Activated CD4-positive, alpha-beta T cell treated with anti-CD3 and anti-CD28 coated beads for 36 hours (primary cell): ENCODE measurements at regions of chr5 and their contacts with region 1.

Region 1: GRCh38 chr5:55936100-55936693 is 58.6 kb downstream of the IL6ST start:
- DNase-seq: peak; percentile 91
- ATAC-seq: peak; percentile 81
- H3K4me3 Mint-ChIP-seq: no peak overlapping the region
- H3K27ac Mint-ChIP-seq: no peak overlapping the region
- H3K4me1 Mint-ChIP-seq: peaks cover 16% of the 10 kb centered on the region
- H3K27me3 Mint-ChIP-seq: no peaks in the 10 kb centered on the region

Region 2: DNA sequence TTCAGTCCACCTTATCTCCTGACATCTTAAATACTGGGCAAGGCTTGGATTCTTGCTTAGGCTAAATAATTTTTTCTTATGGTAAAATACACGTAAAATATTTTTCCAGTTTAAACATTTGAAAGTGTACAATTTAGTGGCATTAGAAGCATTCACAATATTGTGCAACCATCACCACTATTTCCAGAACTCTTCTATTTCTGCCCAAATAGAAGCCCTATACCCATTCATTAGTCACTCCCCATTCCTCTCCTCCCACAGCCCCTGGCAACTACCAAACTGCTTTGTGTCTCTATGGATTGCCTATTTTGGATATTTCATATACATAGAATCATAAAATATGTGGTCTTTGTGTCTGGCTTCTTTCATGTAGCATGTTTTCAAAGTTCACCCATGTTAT is 27.4 kb before region 1 on chr5:
- CTCF ChIA-PET with region 1: no interaction called
- POLR2A ChIA-PET with region 1: no interaction called
- intact Hi-C with region 1: no loop called
- DNase-seq: no peak
- ATAC-seq: no peak
- H3K4me3 Mint-ChIP-seq: no peak overlapping the region
- H3K27ac Mint-ChIP-seq: no peak overlapping the region
- H3K4me1 Mint-ChIP-seq: peaks cover 11% of the 10 kb centered on the region
- H3K27me3 Mint-ChIP-seq: peaks cover 6% of the 10 kb centered on the region

Region 3: DNA sequence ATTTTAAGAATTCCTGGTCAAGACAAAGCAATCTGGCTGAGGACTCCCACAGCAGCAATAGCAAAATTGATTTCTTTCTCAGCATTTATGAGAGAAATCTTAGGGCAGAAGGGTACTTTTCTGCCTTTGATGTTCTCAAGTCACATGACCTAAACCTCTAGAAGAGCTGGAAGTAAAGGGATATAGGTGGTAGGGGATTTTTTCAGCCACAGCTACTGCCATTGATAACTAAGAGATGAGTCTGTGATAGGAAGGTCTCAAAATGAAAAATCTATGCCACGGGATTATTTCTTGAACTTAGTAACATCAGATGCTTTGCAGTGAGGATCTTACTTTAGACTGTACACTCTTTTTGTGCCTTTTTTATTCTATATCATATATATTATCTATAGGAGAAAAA is 23.0 kb after region 1 on chr5:
- CTCF ChIA-PET with region 1: interaction called, 16 read pairs
- POLR2A ChIA-PET with region 1: interaction called, 10 read pairs
- intact Hi-C with region 1: loop called in 1 of 2 experiments (anchors 2 kb)
- DNase-seq: no peak
- ATAC-seq: peak; percentile 75
- H3K4me3 Mint-ChIP-seq: no peak overlapping the region
- H3K27ac Mint-ChIP-seq: peak overlapping the region; percentile 72
- H3K4me1 Mint-ChIP-seq: peaks cover 18% of the 10 kb centered on the region
- H3K27me3 Mint-ChIP-seq: no peaks in the 10 kb centered on the region

Region 4: GRCh38 chr5:56164376-56164775 is 228.2 kb after region 1 on chr5:
- CTCF ChIA-PET with region 1: interaction called, 11 read pairs
- POLR2A ChIA-PET with region 1: no interaction called
- intact Hi-C with region 1: no loop called
- DNase-seq: no peak
- ATAC-seq: no peak
- H3K4me3 Mint-ChIP-seq: no peak overlapping the region
- H3K27ac Mint-ChIP-seq: no peak overlapping the region
- H3K4me1 Mint-ChIP-seq: peaks cover 59% of the 10 kb centered on the region
- H3K27me3 Mint-ChIP-seq: no peaks in the 10 kb centered on the region

Region 5: GRCh38 chr5:56264417-56265025 is 328.3 kb after region 1 on chr5:
- CTCF ChIA-PET with region 1: interaction called, 26 read pairs
- POLR2A ChIA-PET with region 1: interaction called, 4 read pairs
- intact Hi-C with region 1: loop called in 1 of 2 experiments (anchors 5 kb)
- DNase-seq: peak; percentile 51
- ATAC-seq: peak; percentile 42
- H3K4me3 Mint-ChIP-seq: no peak overlapping the region
- H3K27ac Mint-ChIP-seq: no peak overlapping the region
- H3K4me1 Mint-ChIP-seq: peaks cover 2% of the 10 kb centered on the region
- H3K27me3 Mint-ChIP-seq: no peaks in the 10 kb centered on the region